ENCODE measurements at regions of chr11 and their contacts with region 1.

Region 1: DNA sequence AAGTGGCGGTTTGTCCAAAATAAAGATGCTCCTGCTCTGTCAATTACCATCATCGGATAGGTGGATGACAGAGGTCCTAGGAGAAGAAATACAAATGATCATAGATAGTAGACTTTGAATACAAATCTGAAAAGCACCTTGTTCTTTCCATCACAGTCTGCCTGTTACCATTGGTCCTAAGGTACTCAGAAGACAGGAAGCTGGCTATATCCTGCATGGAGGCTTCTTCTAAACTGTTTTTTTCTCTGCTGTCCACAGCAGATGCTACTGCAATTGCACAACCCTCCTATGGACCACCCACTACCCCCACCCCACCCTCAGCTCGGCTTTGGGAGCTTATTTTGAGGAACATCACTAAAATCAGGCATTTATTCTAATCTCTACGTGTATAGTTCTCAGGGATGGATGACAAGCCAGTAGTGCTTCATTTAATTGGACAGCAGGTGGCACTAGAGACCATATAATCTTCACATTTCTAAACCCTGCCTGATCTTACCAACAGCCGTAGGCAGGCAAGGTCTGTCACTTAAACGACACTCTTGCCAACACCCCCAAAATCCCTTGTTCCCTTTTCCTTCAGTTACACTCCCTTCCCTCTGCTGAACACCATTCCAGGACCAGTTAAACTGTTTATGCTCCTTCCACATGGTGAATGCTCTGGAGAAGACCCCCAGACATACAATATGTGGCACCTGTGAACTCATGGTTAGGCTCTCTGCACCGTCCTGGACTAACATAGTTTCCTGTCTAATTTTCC is 6.6 kb upstream of the PTS start:
- DNase-seq: peak; percentile 25
- H3K4me3 Mint-ChIP-seq: no peak overlapping the region
- H3K27ac Mint-ChIP-seq: no peak overlapping the region
- H3K4me1 Mint-ChIP-seq: no peaks in the 10 kb centered on the region
- H3K27me3 Mint-ChIP-seq: no peaks in the 10 kb centered on the region

Region 2: GRCh38 chr11:112453601-112454577 is 234.2 kb after region 1 on chr11:
- CTCF ChIA-PET with region 1: interaction called, 12 read pairs
- POLR2A ChIA-PET with region 1: no interaction called
- intact Hi-C with region 1: loop called (anchors 1 kb)
- DNase-seq: peak; percentile 60
- H3K4me3 Mint-ChIP-seq: no peak overlapping the region
- H3K27ac Mint-ChIP-seq: no peak overlapping the region
- H3K4me1 Mint-ChIP-seq: no peaks in the 10 kb centered on the region
- H3K27me3 Mint-ChIP-seq: no peaks in the 10 kb centered on the region

Region 3: DNA sequence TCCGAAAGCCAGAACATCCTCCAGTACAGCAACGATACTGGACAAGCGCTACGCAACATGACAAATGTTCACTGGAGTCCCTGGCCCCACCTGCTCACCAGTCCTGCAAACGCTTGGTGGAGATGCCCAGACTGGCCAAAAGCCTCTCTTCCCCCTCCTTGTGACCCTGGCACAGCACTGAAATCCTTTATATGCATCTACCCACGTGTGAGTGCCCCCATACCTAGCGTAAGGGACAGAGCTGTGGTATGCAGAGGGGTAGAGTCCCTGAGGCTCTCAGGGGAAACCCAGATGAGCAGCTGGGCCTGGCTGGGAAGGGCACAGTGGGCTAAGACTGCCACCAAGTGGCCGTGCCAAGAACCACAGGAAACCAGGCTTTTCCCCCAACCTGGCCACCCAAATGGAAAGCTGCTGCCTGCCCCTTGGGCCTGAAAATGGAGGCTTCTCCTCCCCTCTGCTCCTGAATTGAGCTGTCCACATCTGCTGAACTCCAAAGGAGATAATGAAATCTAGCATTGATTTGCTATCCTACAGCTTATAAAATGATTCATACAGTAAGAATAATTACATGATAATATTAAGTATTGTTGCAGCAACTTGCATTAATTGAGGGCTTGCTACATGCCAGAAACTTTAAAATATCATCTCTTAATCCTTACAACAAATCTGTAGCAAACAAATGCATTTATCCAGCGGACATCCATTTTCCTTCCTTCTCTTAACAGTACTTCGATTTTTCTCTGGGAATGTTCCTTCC is 1070.0 kb after region 1 on chr11:
- CTCF ChIA-PET with region 1: interaction called, 11 read pairs
- POLR2A ChIA-PET with region 1: no interaction called
- intact Hi-C with region 1: loop called (anchors 10 kb)
- DNase-seq: peak; percentile 79
- H3K4me3 Mint-ChIP-seq: no peak overlapping the region
- H3K27ac Mint-ChIP-seq: no peak overlapping the region
- H3K4me1 Mint-ChIP-seq: no peaks in the 10 kb centered on the region
- H3K27me3 Mint-ChIP-seq: peaks cover 11% of the 10 kb centered on the region